GM12878 (cell line): ENCODE measurements at regions of chr2 and their contacts with region 1.

Region 1: GRCh38 chr2:179031731-179032408 is 18.1 kb downstream of the CCDC141 start:
- DNase-seq: peak; percentile 88
- ATAC-seq: peak; percentile 94
- H3K4me3 ChIP-seq: peak overlapping the region; percentile 46
- H3K27ac ChIP-seq: peak overlapping the region; percentile 95
- H3K4me1 ChIP-seq: peaks cover 15% of the 10 kb centered on the region
- H3K27me3 ChIP-seq: no peaks in the 10 kb centered on the region
- CTCF ChIP-seq: no peak
- EP300 ChIP-seq: peak; percentile 51 to 65; a peak in 2 of 4 replicates
- POLR2A ChIP-seq: no peak
- RAD21 ChIP-seq: 0 out of 2 replicates have a peak, but pooled peaks have one; percentile 9

Region 2: GRCh38 chr2:178928077-178928476 is 103.8 kb before region 1 on chr2:
- CTCF ChIA-PET with region 1: interaction called, 5 read pairs
- POLR2A ChIA-PET with region 1: interaction called, 5 read pairs
- RAD21 ChIA-PET with region 1: interaction called, 15 read pairs
- SMC1A ChIA-PET with region 1: interaction called, 4 read pairs
- in situ Hi-C with region 1: no loop called
- intact Hi-C with region 1: no loop called
- DNase-seq: peak; percentile 24
- ATAC-seq: peak; percentile 85
- H3K4me3 ChIP-seq: 0 out of 2 replicates have a peak overlapping the region, but pooled peaks have one; percentile 64
- H3K27ac ChIP-seq: no peak overlapping the region; the same call in 1 of the 2 replicates
- H3K4me1 ChIP-seq: peaks cover 14% of the 10 kb centered on the region
- H3K27me3 ChIP-seq: no peaks in the 10 kb centered on the region
- CTCF ChIP-seq: no peak
- EP300 ChIP-seq: no peak
- POLR2A ChIP-seq: no peak
- RAD21 ChIP-seq: no peak

Region 3: GRCh38 chr2:179049546-179050311 is 17.9 kb after region 1 on chr2 and contains the start of gene CCDC141:
- CTCF ChIA-PET with region 1: interaction called, 22 read pairs
- POLR2A ChIA-PET with region 1: interaction called, 20 read pairs
- RAD21 ChIA-PET with region 1: interaction called, 14 read pairs
- SMC1A ChIA-PET with region 1: interaction called, 89 read pairs
- in situ Hi-C with region 1: no loop called
- intact Hi-C with region 1: no loop called
- DNase-seq: peak; percentile 37
- ATAC-seq: peak; percentile 77
- H3K4me3 ChIP-seq: peak within 1 kb of the TSS; percentile 68
- H3K27ac ChIP-seq: peak within 1 kb of the TSS; percentile 69
- H3K4me1 ChIP-seq: peaks cover 31% of the 10 kb centered on the region
- H3K27me3 ChIP-seq: no peaks in the 10 kb centered on the region
- CTCF ChIP-seq: no peak
- EP300 ChIP-seq: 0 out of 4 replicates have a peak, but pooled peaks of 1 of the 2 experiments have one; percentile 15
- POLR2A ChIP-seq: peak; percentile 35; the same call in 1 of the 2 replicates
- RAD21 ChIP-seq: no peak
- polyA plus RNA-seq, gene CCDC141: 0.84 to 2.1 TPM

Region 4: GRCh38 chr2:179096090-179096489 is 64.2 kb after region 1 on chr2:
- CTCF ChIA-PET with region 1: interaction called, 3 read pairs
- POLR2A ChIA-PET with region 1: no interaction called
- RAD21 ChIA-PET with region 1: interaction called, 7 read pairs
- SMC1A ChIA-PET with region 1: interaction called, 23 read pairs
- in situ Hi-C with region 1: no loop called
- intact Hi-C with region 1: no loop called
- DNase-seq: peak; percentile 40
- ATAC-seq: peak; percentile 93
- H3K4me3 ChIP-seq: no peak overlapping the region
- H3K27ac ChIP-seq: 0 out of 2 replicates have a peak overlapping the region, but pooled peaks have one; percentile 23
- H3K4me1 ChIP-seq: peaks cover 19% of the 10 kb centered on the region
- H3K27me3 ChIP-seq: no peaks in the 10 kb centered on the region
- CTCF ChIP-seq: no peak
- EP300 ChIP-seq: peak; percentile 48 to 50; a peak in 2 of 4 replicates
- POLR2A ChIP-seq: no peak
- RAD21 ChIP-seq: no peak

Region 5: DNA sequence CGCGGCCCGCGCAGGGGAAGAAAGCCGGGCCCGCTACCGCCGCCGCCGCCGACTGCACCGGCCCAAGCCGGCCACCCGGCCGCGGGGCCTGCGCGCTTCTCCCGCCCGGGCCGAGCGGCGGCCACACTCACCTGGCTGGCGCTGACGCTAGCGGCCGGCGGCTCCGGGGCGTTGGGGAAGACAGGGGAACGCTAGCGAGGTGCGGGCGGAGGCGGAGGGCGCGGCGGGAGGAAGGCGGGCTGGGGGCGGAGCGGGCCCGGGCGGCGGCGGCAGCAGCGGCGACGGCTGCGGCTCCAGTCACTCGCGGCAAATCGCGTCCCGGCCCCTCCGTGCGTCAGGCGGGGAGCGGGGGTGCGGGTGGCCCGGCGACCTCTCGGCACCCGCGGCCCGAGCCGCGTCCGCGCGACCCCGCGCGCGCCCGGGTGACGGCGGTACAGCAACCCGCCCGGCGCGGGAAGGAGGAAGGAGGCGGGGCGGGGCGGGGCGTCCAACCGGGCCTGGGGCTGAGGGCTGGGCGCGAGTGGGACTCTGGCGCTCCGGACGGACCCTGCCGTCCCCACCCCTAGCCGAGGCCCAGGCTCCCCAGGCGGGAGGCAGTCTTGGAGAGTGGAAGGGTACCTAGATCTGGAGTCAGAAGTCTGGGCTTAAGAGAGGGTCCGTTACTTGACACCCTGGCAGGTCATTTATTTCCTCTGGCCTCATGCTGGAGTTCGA is 232.7 kb after region 1 on chr2 and contains the start of gene SESTD1:
- CTCF ChIA-PET with region 1: no interaction called
- POLR2A ChIA-PET with region 1: no interaction called
- RAD21 ChIA-PET with region 1: no interaction called
- SMC1A ChIA-PET with region 1: interaction called, 3 read pairs
- in situ Hi-C with region 1: no loop called
- intact Hi-C with region 1: loop called (anchors 5 kb)
- DNase-seq: no peak
- ATAC-seq: peak; percentile 70
- H3K4me3 ChIP-seq: peak within 1 kb of the TSS; percentile 97
- H3K27ac ChIP-seq: peak within 1 kb of the TSS; percentile 52; the same call in 1 of the 2 replicates
- H3K4me1 ChIP-seq: peaks cover 5% of the 10 kb centered on the region
- H3K27me3 ChIP-seq: no peaks in the 10 kb centered on the region
- CTCF ChIP-seq: no peak
- EP300 ChIP-seq: no peak
- POLR2A ChIP-seq: peak; percentile 64
- RAD21 ChIP-seq: no peak
- polyA plus RNA-seq, gene SESTD1: 5.4 to 6.2 TPM